SK-N-SH (cell line): ENCODE measurements at regions of chr2 and their contacts with region 1.

Region 1: GRCh38 chr2:9770308-9771100 is 72.8 kb upstream of the TAF1B start:
- DNase-seq: peak; percentile 79
- H3K4me3 ChIP-seq: no peak overlapping the region
- H3K27ac ChIP-seq: peak overlapping the region in 1 of 2 experiments; percentile 28; a peak in 1 of 4 replicates
- H3K4me1 ChIP-seq: peaks cover 5 to 32% of the 10 kb centered on the region in 2 experiments; a peak in 2 of 4 replicates
- H3K27me3 ChIP-seq: no peaks in the 10 kb centered on the region
- CTCF ChIP-seq: peak; percentile 73
- EP300 ChIP-seq: no peak
- RAD21 ChIP-seq: peak; percentile 57

Region 2: DNA sequence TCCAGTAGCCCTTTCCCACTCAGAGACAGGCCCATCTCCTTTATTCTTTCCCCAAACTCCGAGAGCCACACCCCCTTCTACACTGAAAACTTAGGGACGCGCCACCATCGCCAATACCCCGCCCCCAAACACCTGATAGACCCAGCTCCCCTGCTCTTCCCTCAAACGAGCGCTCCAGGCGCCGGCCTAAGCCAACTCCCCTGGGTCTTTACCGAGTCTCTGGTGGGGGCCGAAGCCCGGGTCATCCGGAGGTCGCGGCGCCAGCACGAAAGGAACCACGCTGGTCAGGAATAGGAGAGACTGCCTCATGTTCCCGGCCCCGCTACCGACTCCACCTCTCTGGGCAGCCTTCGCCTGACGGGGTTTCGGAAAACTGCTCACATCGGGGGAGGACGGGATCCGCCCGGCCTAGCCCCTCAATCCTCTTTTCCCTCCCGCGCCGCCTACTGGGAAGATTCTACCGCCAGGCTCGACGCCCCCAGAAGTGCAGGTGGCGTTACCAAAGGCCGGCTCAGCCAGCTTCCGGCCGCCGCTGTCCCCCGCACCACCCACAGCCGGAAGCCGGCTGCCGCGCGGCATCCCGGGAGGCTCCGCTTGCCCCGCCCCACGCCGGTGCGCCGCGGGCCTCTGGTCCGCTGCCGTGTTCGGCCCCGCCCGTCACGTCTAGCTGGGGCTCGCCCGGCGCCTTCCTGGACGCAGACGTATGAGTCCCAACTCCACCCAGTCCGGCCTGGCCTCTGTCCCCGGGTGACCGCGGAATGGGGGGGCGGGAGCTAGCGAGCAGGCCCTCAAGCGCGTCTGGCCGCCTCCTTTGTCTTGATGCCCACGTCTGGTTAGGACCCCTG is 215.0 kb before region 1 on chr2 and contains the start of gene ADAM17:
- CTCF ChIA-PET with region 1: interaction called, 10 read pairs
- POLR2A ChIA-PET with region 1: interaction called, 6 read pairs
- DNase-seq: peak; percentile 99
- H3K4me3 ChIP-seq: peak within 1 kb of the TSS; percentile 96 to 97
- H3K27ac ChIP-seq: peak within 1 kb of the TSS; percentile 98 to 99
- H3K4me1 ChIP-seq: peaks cover 13 to 23% of the 10 kb centered on the region in 2 experiments; a peak in 3 of 4 replicates
- H3K27me3 ChIP-seq: no peaks in the 10 kb centered on the region
- CTCF ChIP-seq: peak; percentile 55
- EP300 ChIP-seq: peak; percentile 27 to 44; a peak in 3 of 4 replicates
- RAD21 ChIP-seq: no peak; the same call in none of the 2 replicates
- polyA plus RNA-seq, gene ADAM17: 12.8 and 17.1 TPM in 2 replicates

Region 3: DNA sequence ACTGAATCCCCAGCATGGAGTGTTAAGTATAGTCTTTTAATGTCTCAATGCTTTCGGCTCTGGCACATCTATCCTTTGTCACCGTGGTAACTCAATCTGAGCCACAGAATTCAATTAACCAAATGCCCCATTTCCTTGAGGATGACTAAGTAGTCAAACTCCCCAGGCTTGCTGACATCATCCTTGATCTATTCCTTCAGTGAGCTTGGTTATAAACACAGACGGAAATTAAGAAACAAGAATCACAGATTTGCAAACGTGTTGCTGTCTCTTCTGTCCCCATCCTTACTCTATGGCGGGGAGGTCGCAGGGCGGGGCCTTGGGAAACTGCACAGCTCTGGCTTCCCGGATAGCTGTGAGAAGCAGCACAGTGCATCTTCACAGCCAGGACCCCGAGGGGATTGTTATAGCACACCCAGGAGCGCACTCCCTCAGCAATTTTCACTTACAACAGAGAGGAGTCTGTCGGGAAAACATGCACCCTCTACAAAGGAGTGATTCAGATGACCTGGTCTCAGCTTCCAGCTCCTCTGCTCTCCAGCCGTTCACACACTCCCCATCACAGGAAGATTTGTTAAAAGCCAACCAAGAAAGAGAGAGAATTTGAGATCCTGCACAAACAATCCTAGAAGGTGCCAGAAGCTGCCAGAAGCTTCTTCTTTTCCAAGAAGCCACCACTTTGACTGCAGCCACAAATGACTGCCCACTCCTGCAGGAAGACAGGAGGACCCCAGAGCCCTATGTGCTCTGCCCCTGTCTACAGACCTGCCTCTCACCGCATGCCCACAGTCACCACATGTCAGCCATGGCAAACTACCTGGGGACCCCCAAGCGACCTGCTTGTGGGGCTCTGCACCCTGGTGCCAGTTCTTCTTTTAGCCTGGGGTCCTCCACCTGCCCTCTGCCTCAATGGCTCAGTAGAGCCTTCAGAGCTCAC is 94.8 kb before region 1 on chr2:
- CTCF ChIA-PET with region 1: no interaction called
- POLR2A ChIA-PET with region 1: no interaction called
- DNase-seq: no peak
- H3K4me3 ChIP-seq: peak overlapping the region; percentile 22 to 60; a peak in 3 of 4 replicates
- H3K27ac ChIP-seq: peak overlapping the region in 1 of 2 experiments; percentile 88; a peak in 3 of 4 replicates
- H3K4me1 ChIP-seq: peaks cover 20 to 24% of the 10 kb centered on the region in 2 experiments; a peak in 3 of 4 replicates
- H3K27me3 ChIP-seq: no peaks in the 10 kb centered on the region
- CTCF ChIP-seq: 0 out of 2 replicates have a peak, but pooled peaks have one; percentile 6
- EP300 ChIP-seq: peak; percentile 6 to 74; a peak in 2 of 4 replicates
- RAD21 ChIP-seq: no peak

Region 4: DNA sequence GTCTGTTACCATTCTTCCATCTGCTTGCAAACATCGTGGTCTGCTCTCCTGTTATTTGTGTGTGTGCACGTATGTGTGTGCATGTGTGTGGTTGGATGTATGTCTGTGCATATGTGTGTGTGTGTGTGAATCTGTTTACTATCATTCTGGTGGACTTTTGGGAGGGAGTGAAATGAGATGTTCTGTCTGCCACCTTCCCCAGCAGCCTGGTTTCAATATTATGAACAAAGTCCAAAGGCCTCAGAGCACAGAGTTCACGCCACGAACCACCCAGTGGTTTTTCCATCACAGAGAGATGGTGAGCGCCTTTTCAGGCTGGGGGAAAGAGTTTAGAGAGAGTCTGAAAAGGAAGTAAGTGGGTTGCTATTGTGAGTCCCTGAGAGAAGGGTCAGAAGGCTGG is 72.6 kb before region 1 on chr2:
- CTCF ChIA-PET with region 1: no interaction called
- POLR2A ChIA-PET with region 1: no interaction called
- DNase-seq: no peak
- H3K4me3 ChIP-seq: no peak overlapping the region
- H3K27ac ChIP-seq: no peak overlapping the region
- H3K4me1 ChIP-seq: no peaks in the 10 kb centered on the region
- H3K27me3 ChIP-seq: no peaks in the 10 kb centered on the region
- CTCF ChIP-seq: no peak
- EP300 ChIP-seq: no peak
- RAD21 ChIP-seq: no peak

Region 5: GRCh38 chr2:9744256-9745012 is 26.1 kb before region 1 on chr2:
- CTCF ChIA-PET with region 1: interaction called, 17 read pairs
- POLR2A ChIA-PET with region 1: no interaction called
- DNase-seq: peak; percentile 83
- H3K4me3 ChIP-seq: no peak overlapping the region
- H3K27ac ChIP-seq: no peak overlapping the region
- H3K4me1 ChIP-seq: peaks cover 0 to 13% of the 10 kb centered on the region in 2 experiments; a peak in 1 of 4 replicates
- H3K27me3 ChIP-seq: no peaks in the 10 kb centered on the region
- CTCF ChIP-seq: no peak
- EP300 ChIP-seq: peak in 1 of 2 experiments; percentile 54; a peak in 2 of 4 replicates
- RAD21 ChIP-seq: peak; percentile 29; the same call in 1 of the 2 replicates

Region 6: DNA sequence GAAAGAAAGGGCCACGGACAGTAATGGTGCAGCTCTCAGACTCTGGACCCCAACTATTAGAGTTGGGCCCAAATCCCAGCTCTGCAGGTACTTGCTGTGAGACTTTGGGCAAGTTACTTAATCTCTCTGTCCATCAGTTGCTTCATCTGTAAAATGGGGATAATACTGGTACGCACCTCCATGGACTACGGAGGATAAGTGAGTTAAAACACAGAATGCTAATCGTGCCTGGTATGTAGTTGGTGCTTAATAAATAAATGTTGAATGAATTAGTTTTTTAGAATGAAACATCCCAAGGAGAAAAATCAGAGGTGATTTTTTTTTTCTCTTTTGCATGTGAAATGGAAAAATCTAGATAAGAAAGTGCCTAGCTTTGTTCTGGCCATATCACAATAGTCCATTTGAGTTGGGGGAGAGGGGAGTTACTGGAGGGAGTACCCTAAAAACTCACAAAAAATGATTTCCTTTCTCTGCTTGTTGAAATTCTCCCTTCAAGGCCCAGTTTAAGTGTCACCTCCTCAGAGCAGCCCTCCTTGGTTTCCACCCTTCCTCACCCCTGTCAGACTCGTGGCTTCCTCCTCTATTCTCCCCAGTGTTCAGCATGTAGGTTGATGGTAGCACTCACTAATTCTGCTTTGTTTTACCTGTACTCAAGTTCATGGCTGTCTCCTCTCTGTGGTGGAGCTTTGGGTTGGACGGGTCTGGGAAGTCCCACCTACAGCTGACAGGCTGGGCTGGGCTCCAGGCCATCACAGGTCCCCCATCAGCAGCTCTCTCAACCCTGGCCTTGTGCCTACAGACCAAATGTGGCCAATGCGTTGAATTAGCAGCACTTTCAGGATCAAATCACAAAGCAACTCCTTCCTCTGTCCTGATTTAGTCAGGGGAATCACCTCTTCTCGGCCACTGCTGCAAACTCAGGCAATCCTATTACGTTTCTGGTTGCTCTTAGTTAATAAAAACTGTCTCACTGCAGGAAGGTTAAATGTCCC is 20.0 kb before region 1 on chr2:
- CTCF ChIA-PET with region 1: interaction called, 101 read pairs
- POLR2A ChIA-PET with region 1: no interaction called
- DNase-seq: no peak
- H3K4me3 ChIP-seq: no peak overlapping the region
- H3K27ac ChIP-seq: no peak overlapping the region
- H3K4me1 ChIP-seq: peaks cover 15 to 17% of the 10 kb centered on the region in 2 experiments; a peak in 3 of 4 replicates
- H3K27me3 ChIP-seq: no peaks in the 10 kb centered on the region
- CTCF ChIP-seq: no peak
- EP300 ChIP-seq: no peak
- RAD21 ChIP-seq: no peak

Region 7: DNA sequence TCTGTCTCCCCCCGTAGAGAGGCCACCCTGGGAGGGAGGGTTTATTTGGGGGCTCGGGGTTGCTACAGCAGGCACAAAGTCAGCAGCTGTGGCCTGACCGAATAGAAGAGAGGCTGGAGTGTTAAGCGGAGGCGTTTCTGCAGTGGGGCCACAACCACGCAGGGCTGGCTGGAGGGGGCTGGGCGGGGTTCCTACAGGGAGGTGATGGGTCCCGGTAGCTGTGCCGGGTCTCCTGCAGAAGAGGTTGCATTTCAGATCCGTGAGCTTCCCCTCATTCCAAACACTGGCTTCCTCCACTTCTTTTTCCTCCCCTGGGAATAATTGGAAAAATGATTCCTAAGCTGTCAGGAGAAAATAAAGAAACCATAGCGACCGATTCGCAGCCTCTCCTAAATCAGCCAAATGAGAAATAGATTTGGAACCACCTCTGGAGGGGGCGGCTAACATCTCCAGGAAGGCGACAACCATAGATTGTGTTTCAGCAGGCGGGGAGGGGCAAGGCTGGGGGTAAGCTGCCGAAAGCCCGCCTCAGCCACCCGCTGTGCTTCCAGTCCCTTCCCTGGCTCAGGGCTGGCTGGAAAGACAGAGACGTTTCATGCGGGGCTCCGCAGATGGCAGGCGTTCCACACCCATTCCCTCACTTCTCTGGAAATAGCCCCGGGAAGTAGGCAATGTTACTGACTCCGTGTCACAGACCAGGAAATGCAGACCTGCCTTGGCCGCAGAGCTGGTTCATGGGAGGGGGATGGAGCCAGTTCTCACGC is 12.8 kb before region 1 on chr2:
- CTCF ChIA-PET with region 1: interaction called, 101 read pairs
- POLR2A ChIA-PET with region 1: no interaction called
- DNase-seq: no peak
- H3K4me3 ChIP-seq: no peak overlapping the region
- H3K27ac ChIP-seq: no peak overlapping the region
- H3K4me1 ChIP-seq: peaks cover 11 to 13% of the 10 kb centered on the region in 2 experiments; a peak in 3 of 4 replicates
- H3K27me3 ChIP-seq: 0 out of 2 replicates have a peak, but pooled peaks cover 10% of the 10 kb centered on the region
- CTCF ChIP-seq: no peak
- EP300 ChIP-seq: no peak
- RAD21 ChIP-seq: no peak

Region 8: GRCh38 chr2:9782197-9782719 is 11.8 kb after region 1 on chr2:
- CTCF ChIA-PET with region 1: interaction called, 42 read pairs
- POLR2A ChIA-PET with region 1: interaction called, 3 read pairs
- DNase-seq: no peak
- H3K4me3 ChIP-seq: no peak overlapping the region
- H3K27ac ChIP-seq: no peak overlapping the region
- H3K4me1 ChIP-seq: peaks cover 0 to 15% of the 10 kb centered on the region in 2 experiments; a peak in 1 of 4 replicates
- H3K27me3 ChIP-seq: no peaks in the 10 kb centered on the region
- CTCF ChIP-seq: peak; percentile 18; the same call in 1 of the 2 replicates
- EP300 ChIP-seq: no peak
- RAD21 ChIP-seq: peak; percentile 55

Region 9: DNA sequence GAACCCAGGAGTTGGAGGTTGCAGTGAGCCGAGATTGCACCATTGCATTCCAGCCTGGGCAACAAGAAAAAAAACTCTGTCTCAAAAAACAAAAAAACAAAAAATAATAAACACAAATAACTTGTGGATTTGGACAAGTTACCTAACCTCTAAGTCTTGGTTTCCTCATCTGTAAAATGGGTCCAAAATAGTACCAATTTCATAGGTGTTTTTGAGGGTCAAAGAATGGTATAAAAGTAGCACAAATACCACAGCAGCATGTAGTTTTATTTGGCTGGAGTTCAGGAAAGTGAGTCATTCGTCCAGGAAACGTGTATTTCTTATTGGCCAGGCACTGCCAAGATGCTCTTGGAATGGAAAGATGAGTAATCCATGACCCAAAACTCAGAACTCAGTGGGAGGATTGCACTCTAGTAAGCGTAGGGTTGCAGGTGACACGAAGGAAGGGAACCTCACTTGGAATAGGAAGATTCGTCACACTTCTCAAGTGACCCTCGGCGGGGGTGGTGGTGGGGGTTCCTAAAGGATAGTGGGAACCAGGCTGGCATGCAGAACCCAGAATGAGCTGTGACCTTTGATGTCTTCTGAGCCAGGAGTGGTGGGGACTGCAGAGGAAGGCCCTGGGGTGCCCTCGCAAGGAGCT is 205.4 kb after region 1 on chr2:
- CTCF ChIA-PET with region 1: no interaction called
- POLR2A ChIA-PET with region 1: no interaction called
- DNase-seq: no peak
- H3K4me3 ChIP-seq: no peak overlapping the region
- H3K27ac ChIP-seq: peak overlapping the region in 1 of 2 experiments; percentile 57; a peak in 2 of 4 replicates
- H3K4me1 ChIP-seq: peaks cover 4 to 34% of the 10 kb centered on the region in 2 experiments; a peak in 3 of 4 replicates
- H3K27me3 ChIP-seq: no peaks in the 10 kb centered on the region
- CTCF ChIP-seq: no peak
- EP300 ChIP-seq: peak in 1 of 2 experiments; percentile 86; a peak in 1 of 4 replicates
- RAD21 ChIP-seq: no peak